Naive thymus-derived CD4-positive, alpha-beta T cell (primary cell): ENCODE measurements at regions of chr9 and their contacts with region 1.

Region 1: DNA sequence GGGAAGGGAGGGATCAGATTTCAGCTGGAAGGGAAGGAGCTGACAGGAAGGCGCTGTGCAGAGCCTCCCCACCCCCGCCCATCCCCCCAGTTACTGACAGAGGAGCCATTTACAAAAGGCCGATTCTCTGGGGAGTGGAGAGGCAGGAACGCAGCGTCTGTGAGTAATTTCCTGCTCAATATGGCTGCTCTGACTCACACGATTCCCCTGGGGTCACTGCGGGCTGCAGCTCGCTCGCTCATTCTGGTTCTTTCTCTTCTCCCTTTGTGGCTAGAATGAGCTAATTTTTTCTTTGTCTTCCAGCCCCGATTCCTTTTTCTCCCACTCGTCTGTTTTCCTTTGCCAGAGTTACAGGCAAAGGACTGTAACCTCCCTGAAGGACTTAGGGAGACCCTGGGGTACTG is 28.8 kb downstream of the PTPA start:
- DNase-seq: peak; percentile 31 to 82 (median 66)
- ATAC-seq: peak; percentile 90
- H3K4me3 ChIP-seq: peak overlapping the region; percentile 64
- H3K4me3 Mint-ChIP-seq: peak overlapping the region; percentile 85 to 96 (median 90)
- H3K27ac ChIP-seq: peak overlapping the region; percentile 92
- H3K27ac Mint-ChIP-seq: peak overlapping the region; percentile 88 to 99 (median 94)
- H3K4me1 ChIP-seq: peaks cover 24 to 35% of the 10 kb centered on the region in 2 donors
- H3K4me1 Mint-ChIP-seq: peaks cover 11 to 45% (median 29%) of the 10 kb centered on the region in 7 donors
- H3K27me3 ChIP-seq: no peaks in the 10 kb centered on the region
- H3K27me3 Mint-ChIP-seq: no peaks in the 10 kb centered on the region

Region 2: DNA sequence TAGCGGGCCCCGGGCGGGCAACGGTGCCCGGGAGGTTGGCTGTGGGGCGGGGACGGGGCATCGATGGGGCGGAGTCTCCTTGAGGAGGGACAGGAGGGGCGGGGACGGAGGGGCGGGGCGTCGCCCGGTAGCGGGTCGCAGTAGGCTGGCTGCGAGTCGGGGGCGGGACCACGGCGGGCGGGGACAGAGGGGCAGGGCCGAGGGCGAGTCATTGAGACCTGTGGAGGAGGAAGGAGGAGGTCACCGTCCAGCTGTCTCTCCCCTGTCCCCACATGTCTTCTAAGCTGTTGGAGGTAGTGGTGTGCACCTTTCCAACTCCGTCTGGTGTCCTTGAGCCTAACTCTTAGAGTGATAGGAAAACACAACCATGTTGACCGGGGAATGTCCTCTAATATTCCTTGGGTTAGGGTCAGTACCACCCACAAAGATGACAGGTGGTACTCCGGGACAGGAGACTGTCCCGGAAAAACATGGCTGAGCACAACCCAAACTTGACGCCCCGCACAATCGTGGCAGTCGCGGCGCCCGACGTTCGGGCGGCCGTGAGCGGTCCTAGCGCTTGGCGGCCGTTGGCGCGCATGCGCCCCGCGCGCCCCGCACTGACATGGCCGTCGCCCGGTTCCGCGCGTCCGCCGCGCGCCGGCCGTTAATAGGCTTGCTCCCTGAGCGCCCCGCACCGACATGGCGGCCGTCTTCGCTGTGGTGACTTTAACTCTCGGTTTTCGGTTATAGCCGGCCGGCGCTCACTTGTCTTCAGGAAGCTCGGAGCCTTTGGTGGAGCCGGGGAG is 29.1 kb before region 1 on chr9 and contains the starts of genes CRAT and PTPA:
- CTCF ChIA-PET with region 1: no interaction called
- POLR2A ChIA-PET with region 1: interaction called, 3 read pairs
- intact Hi-C with region 1: loop called in 1 of 2 experiments (anchors 1 kb)
- DNase-seq: peak; percentile 85 to 96 (median 89)
- ATAC-seq: peak; percentile 93
- H3K4me3 ChIP-seq: peak within 1 kb of the TSS; percentile 82
- H3K4me3 Mint-ChIP-seq: peak within 1 kb of the TSS; percentile 88 to 97 (median 92)
- H3K27ac ChIP-seq: peak within 1 kb of the TSS; percentile 87
- H3K27ac Mint-ChIP-seq: peak within 1 kb of the TSS; percentile 83 to 97 (median 94)
- H3K4me1 ChIP-seq: peaks cover 10% of the 10 kb centered on the region in 2 donors
- H3K4me1 Mint-ChIP-seq: peaks cover 26 to 45% (median 29%) of the 10 kb centered on the region in 7 donors
- H3K27me3 ChIP-seq: no peaks in the 10 kb centered on the region
- H3K27me3 Mint-ChIP-seq: no peaks in the 10 kb centered on the region
- total RNA-seq, gene CRAT: 7.2 to 15.6 (median 11.4) TPM
- total RNA-seq, gene PTPA: 45.0 to 110 (median 52.3) TPM

Region 3: DNA sequence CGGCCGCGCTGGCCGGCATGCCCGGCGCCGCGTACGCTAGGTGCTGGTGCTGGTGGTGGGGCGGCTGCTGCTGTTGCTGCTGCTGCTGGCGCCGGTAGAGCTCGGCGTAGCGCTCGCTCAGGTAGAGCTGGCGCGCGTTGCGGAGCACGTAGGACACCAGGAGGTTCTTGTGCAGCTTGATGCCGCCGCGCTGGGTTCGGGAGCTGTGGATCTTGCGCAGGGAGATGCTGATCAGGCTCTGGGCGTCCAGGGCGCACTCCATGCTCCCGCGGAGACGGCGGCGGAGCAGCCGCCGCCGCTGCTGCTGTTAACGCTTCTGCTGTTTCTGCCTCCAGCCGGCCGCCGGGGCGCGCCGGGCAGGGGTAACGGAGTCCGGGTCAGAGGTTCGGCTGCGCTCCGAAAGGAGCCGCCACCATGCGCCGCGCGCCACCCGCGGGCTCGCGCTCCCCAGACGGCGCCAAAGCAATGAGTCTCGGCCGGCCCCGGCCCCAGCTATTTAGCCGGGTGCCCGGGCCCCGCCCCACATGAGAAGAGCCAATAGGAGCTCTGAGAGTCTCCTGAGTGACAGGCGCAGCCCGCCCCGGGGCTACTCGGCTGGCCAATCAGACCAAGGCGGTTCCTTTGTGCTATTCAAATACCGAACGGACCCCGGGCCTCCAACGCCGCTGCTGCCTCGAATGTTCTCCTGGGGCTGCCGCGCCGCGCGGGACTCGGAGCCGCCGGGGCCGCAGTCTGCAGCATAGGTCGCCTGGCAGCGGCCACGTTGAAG is 38.0 kb after region 1 on chr9 and contains the start of gene IER5L:
- CTCF ChIA-PET with region 1: interaction called, 37 read pairs
- POLR2A ChIA-PET with region 1: interaction called, 16 read pairs
- intact Hi-C with region 1: loop called (anchors 1 kb)
- DNase-seq: peak; percentile 89 to 97 (median 93)
- ATAC-seq: peak; percentile 94
- H3K4me3 ChIP-seq: peak within 1 kb of the TSS; percentile 86
- H3K4me3 Mint-ChIP-seq: peak within 1 kb of the TSS; percentile 90 to 96 (median 92)
- H3K27ac ChIP-seq: peak within 1 kb of the TSS; percentile 59
- H3K27ac Mint-ChIP-seq: peak within 1 kb of the TSS in 7 of 9 donors; percentile 43 to 81 (median 62)
- H3K4me1 ChIP-seq: peaks cover 0 to 4% of the 10 kb centered on the region in 2 donors
- H3K4me1 Mint-ChIP-seq: peaks cover 0 to 17% (median 5%) of the 10 kb centered on the region in 7 donors
- H3K27me3 ChIP-seq: no peaks in the 10 kb centered on the region
- H3K27me3 Mint-ChIP-seq: peaks cover 0 to 7% (median 0%) of the 10 kb centered on the region in 5 donors
- total RNA-seq, gene IER5L: 3.4 to 6.8 (median 3.8) TPM

Region 4: DNA sequence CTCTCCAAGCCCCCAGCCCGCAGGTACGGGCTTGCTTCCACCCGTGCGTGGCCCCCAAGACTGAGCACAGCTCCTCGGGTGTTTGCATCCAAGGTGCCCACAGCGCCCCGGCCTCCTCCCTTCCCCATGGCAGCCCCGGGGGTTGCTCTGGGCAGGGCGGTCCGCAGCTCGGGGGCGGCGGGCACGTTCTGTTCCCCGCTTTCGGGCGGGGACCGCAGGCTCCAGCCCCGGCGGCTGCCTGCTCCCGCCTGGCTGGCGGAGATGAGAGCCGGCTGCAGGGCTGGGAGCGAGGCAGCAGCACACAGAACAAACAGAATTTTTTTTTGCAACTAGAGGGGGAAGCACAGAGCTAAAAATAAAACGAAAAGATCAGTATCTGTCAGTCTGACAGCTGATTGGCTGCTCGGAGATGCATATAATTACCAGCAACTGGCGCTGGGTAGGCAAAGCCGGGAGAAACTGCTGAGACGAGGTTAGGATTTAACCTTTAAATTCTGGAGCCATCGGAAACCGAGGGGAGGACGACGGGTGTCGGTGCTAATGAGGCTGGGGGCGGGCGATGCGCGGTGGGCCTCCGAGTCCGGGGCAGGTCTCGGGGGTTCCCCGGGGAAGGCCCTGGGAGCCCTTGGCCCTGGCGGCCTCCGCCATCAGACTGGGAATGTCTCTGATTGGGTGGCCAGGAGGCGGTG is 180.7 kb after region 1 on chr9:
- CTCF ChIA-PET with region 1: interaction called, 8 read pairs
- POLR2A ChIA-PET with region 1: no interaction called
- intact Hi-C with region 1: loop called in 1 of 2 experiments (anchors 1 kb)
- DNase-seq: peak; percentile 41 to 81 (median 76)
- ATAC-seq: peak; percentile 96
- H3K4me3 ChIP-seq: peak overlapping the region; percentile 61
- H3K4me3 Mint-ChIP-seq: peak overlapping the region; percentile 74 to 94 (median 87)
- H3K27ac ChIP-seq: peak overlapping the region; percentile 63
- H3K27ac Mint-ChIP-seq: peak overlapping the region; percentile 70 to 96 (median 92)
- H3K4me1 ChIP-seq: peaks cover 12 to 17% of the 10 kb centered on the region in 2 donors
- H3K4me1 Mint-ChIP-seq: peaks cover 11 to 22% (median 13%) of the 10 kb centered on the region in 7 donors
- H3K27me3 ChIP-seq: no peaks in the 10 kb centered on the region
- H3K27me3 Mint-ChIP-seq: no peaks in the 10 kb centered on the region

Region 5: GRCh38 chr9:129610473-129611301 is 470.7 kb after region 1 on chr9:
- CTCF ChIA-PET with region 1: interaction called, 33 read pairs
- POLR2A ChIA-PET with region 1: interaction called, 12 read pairs
- intact Hi-C with region 1: loop called (anchors 1 kb)
- DNase-seq: peak; percentile 53 to 79 (median 71)
- ATAC-seq: peak; percentile 83
- H3K4me3 ChIP-seq: peak overlapping the region; percentile 52
- H3K4me3 Mint-ChIP-seq: peak overlapping the region; percentile 57 to 96 (median 80)
- H3K27ac ChIP-seq: peak overlapping the region; percentile 17
- H3K27ac Mint-ChIP-seq: peak overlapping the region in 5 of 9 donors; percentile 62 to 85 (median 67)
- H3K4me1 ChIP-seq: peaks cover 19 to 21% of the 10 kb centered on the region in 2 donors
- H3K4me1 Mint-ChIP-seq: peaks cover 13 to 44% (median 30%) of the 10 kb centered on the region in 7 donors
- H3K27me3 ChIP-seq: no peaks in the 10 kb centered on the region
- H3K27me3 Mint-ChIP-seq: peaks cover 0 to 4% (median 0%) of the 10 kb centered on the region in 5 donors

Region 6: GRCh38 chr9:129737479-129738274 is 597.7 kb after region 1 on chr9:
- CTCF ChIA-PET with region 1: interaction called, 6 read pairs
- POLR2A ChIA-PET with region 1: interaction called, 6 read pairs
- intact Hi-C with region 1: loop called in 1 of 2 experiments (anchors 5 kb)
- DNase-seq: peak; percentile 73 to 95 (median 87)
- ATAC-seq: peak; percentile 96
- H3K4me3 ChIP-seq: peak overlapping the region; percentile 91
- H3K4me3 Mint-ChIP-seq: peak overlapping the region; percentile 66 to 84 (median 78)
- H3K27ac ChIP-seq: peak overlapping the region; percentile 76
- H3K27ac Mint-ChIP-seq: peak overlapping the region; percentile 50 to 94 (median 71)
- H3K4me1 ChIP-seq: peaks cover 6% of the 10 kb centered on the region in 2 donors
- H3K4me1 Mint-ChIP-seq: peaks cover 0 to 12% (median 8%) of the 10 kb centered on the region in 7 donors
- H3K27me3 ChIP-seq: no peaks in the 10 kb centered on the region
- H3K27me3 Mint-ChIP-seq: peaks cover 0 to 2% (median 0%) of the 10 kb centered on the region in 5 donors